Activated T-helper 1 cell treated with anti-CD3 and anti-CD28 coated beads, Interleukin-12 subunit alpha, Interleukin-12 subunit beta, Interleukin-2, Interleukin-4 antibody, amounts not matched to agents 30 ng/mL and 10 ng/mL and 1 ng/mL, durations not matched to agents 14 hours and 24 hours and 36 hours (primary cell): ENCODE measurements at regions of chr11 and their contacts with region 1.

Region 1: DNA sequence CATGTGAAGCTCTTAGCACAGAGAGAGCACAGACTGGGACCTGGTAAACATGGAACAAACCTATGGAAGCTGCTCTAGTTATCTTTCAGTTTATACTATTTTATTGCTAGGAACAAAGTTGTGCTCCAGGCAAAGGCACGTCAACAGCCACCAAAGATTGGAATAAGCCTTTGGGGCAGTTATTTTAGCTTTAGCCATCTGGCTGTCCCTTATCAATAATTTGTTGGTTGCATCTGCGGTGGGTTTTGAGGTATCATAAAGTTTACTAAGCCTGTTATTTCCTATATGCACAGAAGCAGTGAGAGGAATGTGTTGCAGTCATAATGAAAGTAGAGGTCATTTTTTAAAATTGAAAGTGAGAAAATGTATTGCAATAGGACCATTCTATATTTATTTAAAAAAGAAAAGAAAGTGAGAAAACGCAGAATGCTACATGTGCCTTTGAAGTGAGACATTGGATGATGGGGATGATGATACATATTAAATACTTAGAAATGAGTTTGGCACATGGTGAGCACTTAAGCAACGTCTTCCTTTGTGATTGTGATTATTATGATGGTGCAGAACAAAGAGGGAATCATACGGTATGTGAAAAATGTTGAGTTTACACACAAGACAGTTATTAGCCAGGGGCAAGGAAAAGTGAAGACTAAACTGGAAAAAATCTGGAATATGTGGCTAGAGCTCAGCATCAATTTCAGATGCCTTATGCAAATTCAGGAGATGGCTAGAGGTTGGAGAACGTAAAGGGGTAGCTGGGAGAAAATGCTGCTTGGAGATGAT is 58.3 kb downstream of the PRR5L start:
- DNase-seq: no peak
- H3K4me3 Mint-ChIP-seq: peak overlapping the region; percentile 11
- H3K27ac Mint-ChIP-seq: peak overlapping the region; percentile 72
- H3K4me1 Mint-ChIP-seq: peaks cover 78% of the 10 kb centered on the region
- H3K27me3 Mint-ChIP-seq: peaks cover 34% of the 10 kb centered on the region

Region 2: DNA sequence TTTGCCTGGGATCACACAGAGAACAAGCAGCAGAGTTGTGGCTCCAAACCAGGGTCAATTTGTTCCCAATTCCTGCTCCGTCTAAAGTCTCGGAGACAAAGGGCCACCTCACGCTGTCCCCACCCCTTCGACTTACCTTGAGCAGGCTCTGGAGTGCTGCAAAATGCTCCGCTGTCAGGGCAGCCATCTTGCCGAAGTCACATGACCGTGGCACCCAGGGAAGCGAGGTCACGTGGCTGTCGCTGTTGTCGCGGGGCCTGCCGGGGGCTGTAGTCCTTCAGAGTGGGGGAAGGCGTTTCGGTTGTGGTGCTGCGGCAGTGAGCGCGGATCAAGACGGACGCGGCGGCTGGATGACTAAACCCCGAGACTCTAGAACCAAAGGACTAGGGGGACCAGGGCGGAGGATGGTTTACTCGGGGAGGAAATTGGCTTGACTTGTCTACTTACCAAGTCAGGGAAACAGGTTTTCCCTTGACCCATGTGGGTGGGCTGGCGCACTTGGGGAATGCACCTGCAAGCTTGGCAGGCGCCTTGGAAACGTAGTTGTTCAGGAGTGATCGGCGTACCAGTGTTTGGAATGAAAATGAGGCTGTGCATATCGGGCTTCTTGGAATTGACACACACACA is 65.1 kb before region 1 on chr11 and contains the start of gene COMMD9:
- intact Hi-C with region 1: loop called (anchors 1 kb)
- DNase-seq: peak; percentile 93
- H3K4me3 Mint-ChIP-seq: peak within 1 kb of the TSS; percentile 94
- H3K27ac Mint-ChIP-seq: peak within 1 kb of the TSS; percentile 78
- H3K4me1 Mint-ChIP-seq: peaks cover 27% of the 10 kb centered on the region
- H3K27me3 Mint-ChIP-seq: no peaks in the 10 kb centered on the region
- total RNA-seq, gene COMMD9: 39.7 and 41.3 TPM in 2 replicates

Region 3: DNA sequence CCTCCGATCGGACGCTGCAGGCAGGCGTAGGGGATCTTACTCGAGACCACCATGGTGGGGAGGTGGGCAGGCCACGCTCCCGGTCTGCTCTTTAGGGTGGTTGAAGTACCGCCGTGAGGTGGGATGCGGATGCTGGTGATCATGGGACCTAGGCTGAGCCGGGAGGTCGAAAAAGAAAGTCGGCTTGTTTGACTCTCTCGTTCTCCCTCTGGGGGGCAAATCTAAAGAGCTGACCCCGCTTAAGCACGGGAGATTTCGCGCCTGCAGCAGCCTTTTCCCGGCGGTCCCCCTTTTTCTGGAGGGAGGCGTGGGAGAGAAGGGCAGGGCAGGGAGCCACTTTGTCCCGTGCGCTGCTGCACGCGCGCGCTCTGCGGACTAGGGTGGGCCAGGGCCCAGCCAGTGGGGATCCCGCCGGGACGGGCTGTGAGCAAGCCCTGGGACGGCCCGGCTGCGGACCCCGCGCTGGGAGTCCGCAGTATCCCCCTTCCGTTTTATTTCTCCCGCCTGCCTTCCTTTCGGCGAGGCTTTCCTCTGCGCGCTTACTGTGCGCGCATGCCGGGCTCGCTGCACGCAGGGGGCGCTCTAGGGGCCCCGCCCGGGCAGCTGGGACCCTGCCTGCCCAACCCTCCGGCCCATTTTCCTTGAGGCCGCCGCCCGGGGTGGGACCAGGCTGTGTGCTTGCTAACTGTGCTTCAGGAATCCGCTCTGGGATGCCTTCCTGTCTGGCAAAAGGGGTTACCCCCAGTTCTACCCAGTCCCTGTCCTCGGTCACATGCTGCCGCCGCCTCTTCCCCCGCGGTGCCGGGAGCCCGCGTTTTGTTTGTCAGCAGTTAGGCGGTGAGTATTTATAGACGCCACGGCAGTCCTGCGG is 22.7 kb after region 1 on chr11:
- intact Hi-C with region 1: loop called (anchors 1 kb)
- DNase-seq: peak; percentile 63
- H3K4me3 Mint-ChIP-seq: peak overlapping the region; percentile 97
- H3K27ac Mint-ChIP-seq: peak overlapping the region; percentile 88
- H3K4me1 Mint-ChIP-seq: peaks cover 61% of the 10 kb centered on the region
- H3K27me3 Mint-ChIP-seq: peaks cover 33% of the 10 kb centered on the region

Region 4: GRCh38 chr11:36425561-36426081 is 71.2 kb after region 1 on chr11:
- intact Hi-C with region 1: loop called (anchors 1 kb)
- DNase-seq: no peak
- H3K4me3 Mint-ChIP-seq: no peak overlapping the region
- H3K27ac Mint-ChIP-seq: peak overlapping the region; percentile 25
- H3K4me1 Mint-ChIP-seq: peaks cover 62% of the 10 kb centered on the region
- H3K27me3 Mint-ChIP-seq: no peaks in the 10 kb centered on the region

Region 5: DNA sequence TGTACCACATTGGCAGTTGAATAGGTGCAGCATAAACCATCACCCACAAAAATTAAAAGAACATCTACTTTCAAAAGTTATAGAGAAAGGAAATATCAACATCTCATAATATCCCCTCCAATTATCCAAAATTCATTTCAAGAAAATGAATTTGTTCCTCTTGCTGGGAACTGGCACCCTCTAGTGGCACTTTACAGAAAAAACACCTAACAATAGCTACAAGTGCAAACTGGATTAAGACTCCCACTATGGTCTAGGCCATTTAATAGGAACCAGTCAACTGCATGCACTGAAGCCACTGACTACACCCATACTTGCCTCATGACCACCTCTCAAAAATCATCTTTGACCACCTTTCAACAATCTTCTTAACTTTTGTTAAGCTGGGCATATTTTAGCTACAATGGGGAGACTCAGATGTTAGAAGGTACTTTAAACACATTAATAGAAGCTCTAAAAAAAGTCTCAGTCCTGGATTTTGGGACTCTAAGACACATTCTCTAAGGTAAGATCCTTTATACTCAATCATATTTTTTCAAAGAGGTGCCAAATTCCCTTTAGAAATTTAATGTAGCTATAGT is 138.4 kb after region 1 on chr11:
- intact Hi-C with region 1: loop called (anchors 1 kb)
- DNase-seq: no peak
- H3K4me3 Mint-ChIP-seq: no peak overlapping the region
- H3K27ac Mint-ChIP-seq: no peak overlapping the region
- H3K4me1 Mint-ChIP-seq: peaks cover 18% of the 10 kb centered on the region
- H3K27me3 Mint-ChIP-seq: no peaks in the 10 kb centered on the region